BJ (cell line): ENCODE measurements at regions of chr19 and their contacts with region 1.

Region 1: DNA sequence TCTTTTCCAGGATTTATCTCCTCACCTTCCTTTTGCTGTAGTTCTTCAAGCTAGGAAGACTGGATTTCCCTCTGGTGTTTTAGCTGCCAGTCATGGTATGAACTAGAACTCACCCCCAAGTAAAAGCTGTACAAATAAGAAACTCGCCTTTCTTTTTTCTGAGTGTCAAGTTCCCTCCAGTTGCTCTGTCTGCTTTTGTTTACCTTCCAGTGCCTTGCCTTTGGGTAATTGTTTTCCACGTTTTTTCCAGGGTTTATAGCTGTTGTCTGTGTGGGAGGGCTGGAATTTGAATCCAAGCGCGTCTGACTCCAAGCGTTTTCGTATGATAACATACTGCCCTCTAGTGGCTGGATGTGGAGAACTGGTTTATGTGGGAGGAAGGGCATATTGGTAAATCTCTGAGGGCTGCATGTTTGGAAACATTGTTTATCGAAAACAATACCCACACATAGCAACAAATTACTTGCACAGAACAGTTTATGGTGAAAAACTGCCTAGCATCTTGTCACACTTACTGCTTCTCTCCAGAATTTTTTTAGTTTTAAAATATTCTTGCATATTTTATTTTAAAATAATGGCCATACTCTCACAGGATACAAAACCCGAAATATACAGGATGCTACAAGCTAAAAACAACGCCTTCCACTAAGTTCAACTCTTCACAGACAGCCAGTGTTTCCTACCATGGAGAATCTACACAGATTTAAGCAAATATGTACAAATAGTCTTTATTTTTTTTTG is 19.2 kb downstream of the RCN3 start:
- DNase-seq: peak; percentile 74
- H3K4me3 ChIP-seq: no peak overlapping the region
- H3K27me3 ChIP-seq: no peaks in the 10 kb centered on the region
- CTCF ChIP-seq: peak; percentile 77

Region 2: GRCh38 chr19:49502866-49503581 is 44.0 kb before region 1 on chr19:
- CTCF ChIA-PET with region 1: interaction called, 151 read pairs
- POLR2A ChIA-PET with region 1: no interaction called
- DNase-seq: peak; percentile 49
- H3K4me3 ChIP-seq: no peak overlapping the region
- H3K27me3 ChIP-seq: no peaks in the 10 kb centered on the region
- CTCF ChIP-seq: peak; percentile 68

Region 3: DNA sequence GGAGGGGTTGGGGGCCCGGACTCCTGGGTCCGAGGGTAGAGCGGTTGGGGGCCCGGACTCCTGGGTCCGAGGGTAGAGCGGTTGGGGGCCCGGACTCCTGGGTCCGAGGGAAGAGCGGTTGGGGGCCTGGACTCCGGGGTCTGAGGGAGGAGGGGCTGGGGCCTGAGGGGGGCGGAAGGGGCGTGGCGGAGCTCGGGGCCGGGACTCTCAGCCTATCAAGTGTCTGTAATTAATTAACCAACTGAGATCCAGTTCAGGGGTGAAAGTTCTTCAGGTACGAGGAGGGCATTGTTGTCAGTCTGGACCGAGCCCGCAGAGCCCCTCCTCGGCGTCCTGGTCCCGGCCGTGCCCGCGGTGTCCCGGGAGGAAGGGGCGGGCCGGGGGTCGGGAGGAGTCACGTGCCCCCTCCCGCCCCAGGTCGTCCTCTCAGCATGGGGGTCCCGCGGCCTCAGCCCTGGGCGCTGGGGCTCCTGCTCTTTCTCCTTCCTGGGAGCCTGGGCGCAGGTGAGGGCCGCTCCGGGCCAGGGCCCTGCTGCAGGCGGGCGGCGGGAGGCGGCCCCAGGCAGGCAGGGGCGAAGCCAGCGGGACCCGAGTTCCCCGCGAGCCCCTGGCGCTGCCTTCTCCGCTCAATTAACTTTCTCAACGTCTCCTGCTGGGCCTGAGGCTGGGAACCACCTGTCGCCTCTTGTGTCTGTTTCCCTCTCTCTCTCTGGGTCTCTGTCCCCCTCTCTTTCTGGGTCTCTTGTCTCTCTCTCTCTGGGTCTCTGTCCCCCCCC is 33.8 kb before region 1 on chr19:
- CTCF ChIA-PET with region 1: interaction called, 151 read pairs
- POLR2A ChIA-PET with region 1: no interaction called
- DNase-seq: no peak
- H3K4me3 ChIP-seq: peak overlapping the region; percentile 67
- H3K27me3 ChIP-seq: no peaks in the 10 kb centered on the region
- CTCF ChIP-seq: no peak

Region 4: DNA sequence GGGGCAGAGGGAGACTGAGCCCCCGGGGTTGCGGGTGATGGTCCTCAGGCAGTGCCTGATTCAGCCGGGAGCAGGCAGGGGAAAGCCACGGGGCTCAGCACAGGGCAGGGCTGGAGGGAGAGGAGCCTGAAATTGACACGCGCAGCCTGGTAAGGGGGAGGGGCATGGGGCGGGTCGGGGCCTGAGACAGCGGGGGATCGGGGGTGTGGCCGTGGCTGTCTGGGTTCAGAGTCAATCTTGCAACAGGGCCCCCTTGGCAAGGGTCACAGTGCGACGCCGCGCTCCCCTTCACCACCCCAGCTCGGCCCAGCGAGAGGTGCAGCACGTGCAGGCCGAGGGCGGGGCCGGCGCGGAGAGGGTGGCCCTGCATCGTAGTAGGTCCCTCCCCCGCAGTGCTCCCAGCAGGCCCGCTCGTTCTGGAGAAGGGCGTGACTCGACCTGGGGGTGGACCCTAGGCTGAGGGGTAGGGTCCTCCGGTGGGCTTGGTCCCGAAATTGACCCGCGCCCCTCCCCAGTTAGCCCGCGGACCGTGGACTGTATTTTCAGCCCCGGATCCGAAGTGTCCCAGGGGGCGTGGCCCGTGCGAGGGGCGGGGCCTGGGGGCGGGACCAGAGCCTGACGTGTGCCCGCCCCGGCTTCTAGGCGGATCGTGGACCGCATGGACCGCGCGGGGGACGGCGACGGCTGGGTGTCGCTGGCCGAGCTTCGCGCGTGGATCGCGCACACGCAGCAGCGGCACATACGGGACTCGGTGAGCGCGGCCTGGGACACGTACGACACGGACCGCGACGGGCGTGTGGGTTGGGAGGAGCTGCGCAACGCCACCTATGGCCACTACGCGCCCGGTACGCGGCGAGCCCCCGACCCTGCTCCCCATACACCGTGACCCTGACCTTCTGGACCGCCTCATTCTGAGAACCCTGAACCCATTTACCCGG is 13.2 kb before region 1 on chr19:
- CTCF ChIA-PET with region 1: interaction called, 9 read pairs
- POLR2A ChIA-PET with region 1: interaction called, 12 read pairs
- DNase-seq: no peak
- H3K4me3 ChIP-seq: peak overlapping the region; percentile 49
- H3K27me3 ChIP-seq: no peaks in the 10 kb centered on the region
- CTCF ChIP-seq: peak; percentile 31

Region 5: DNA sequence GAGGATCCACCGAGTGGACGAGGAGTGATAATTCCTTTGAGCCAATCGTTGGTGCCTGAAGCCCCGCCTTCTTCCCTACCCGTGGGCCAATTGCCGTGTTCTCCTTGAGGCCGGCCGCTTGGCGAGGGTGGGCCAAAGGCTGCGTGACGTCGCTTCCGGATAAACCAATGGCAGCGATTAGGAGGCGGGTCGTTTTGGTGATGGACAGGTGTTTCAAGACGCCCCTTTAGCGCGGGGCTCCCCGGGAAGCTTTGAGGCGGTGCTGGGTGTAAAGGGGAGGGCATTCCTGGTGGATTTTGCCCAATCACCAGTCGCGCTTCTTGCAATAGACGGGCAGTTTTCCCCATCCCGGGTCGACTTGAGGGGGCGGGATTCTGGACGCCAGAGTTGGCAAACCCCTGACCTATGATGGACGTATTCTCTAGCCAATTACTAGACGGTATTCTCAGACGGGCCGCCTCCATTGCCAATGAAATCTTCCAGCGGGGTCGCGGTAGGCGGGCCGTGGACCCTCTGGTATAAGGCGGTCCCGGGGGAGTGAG is 129.8 kb after region 1 on chr19:
- CTCF ChIA-PET with region 1: interaction called, 11 read pairs
- POLR2A ChIA-PET with region 1: no interaction called
- DNase-seq: peak; percentile 100
- H3K4me3 ChIP-seq: peak overlapping the region; percentile 93
- H3K27me3 ChIP-seq: no peaks in the 10 kb centered on the region
- CTCF ChIP-seq: no peak

Region 6: GRCh38 chr19:49684983-49685553 is 138.1 kb after region 1 on chr19:
- CTCF ChIA-PET with region 1: interaction called, 3 read pairs
- POLR2A ChIA-PET with region 1: interaction called, 13 read pairs
- DNase-seq: no peak
- H3K4me3 ChIP-seq: no peak overlapping the region
- H3K27me3 ChIP-seq: no peaks in the 10 kb centered on the region
- CTCF ChIP-seq: no peak

Region 7: DNA sequence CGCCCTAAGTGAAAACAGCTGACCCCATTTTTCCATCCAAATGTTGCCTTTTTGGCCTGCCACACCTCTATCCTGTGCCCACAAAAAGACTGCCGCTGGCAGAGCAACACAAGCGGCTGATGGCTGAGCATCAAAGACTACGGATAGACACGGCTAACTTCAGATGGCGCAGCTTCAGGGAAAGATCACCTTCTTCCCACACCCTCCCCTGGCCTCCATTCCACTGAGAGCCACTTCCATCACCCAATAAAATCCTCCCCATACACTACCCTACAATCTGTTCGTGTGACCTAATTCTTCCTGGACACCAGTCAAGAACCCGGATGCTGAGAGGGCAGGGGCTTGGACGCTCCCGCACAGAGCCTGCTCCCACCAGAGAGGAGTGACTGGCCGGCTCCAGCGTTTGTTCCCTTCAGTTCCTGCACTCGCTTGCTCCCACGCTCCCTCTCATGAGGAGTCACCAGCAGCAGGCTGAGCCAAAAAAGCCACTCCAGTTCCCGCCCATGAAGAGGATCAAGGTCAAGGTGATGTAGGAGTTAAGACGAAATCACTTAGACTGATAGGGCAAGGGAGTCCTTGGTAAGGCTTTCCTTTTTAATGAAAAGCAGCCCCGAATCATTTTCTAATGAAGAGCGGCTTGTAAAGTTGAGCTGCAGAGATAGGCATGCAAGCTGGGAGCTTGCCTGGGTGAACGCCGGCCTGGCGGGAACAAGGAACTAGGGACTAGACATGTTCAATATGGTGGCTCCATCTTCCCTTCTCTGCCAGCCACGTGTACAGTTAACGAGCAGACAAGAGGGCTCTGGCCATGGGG is 180.4 kb after region 1 on chr19:
- CTCF ChIA-PET with region 1: no interaction called
- POLR2A ChIA-PET with region 1: no interaction called
- DNase-seq: no peak
- H3K4me3 ChIP-seq: no peak overlapping the region
- H3K27me3 ChIP-seq: no peaks in the 10 kb centered on the region
- CTCF ChIP-seq: no peak